Left ventricle myocardium inferior (tissue), 1 donor: ENCODE measurements at regions of chr16 and their contacts with region 1.

Region 1: GRCh38 chr16:58032710-58033293 is 7.2 kb downstream of the MMP15 start:
- DNase-seq: peak; percentile 62
- H3K4me3 ChIP-seq: peak overlapping the region; percentile 27
- H3K27ac ChIP-seq: peak overlapping the region; percentile 96
- H3K4me1 ChIP-seq: peaks cover 89% of the 10 kb centered on the region
- H3K27me3 ChIP-seq: no peaks in the 10 kb centered on the region
- CTCF ChIP-seq: no peak

Region 2: GRCh38 chr16:57846078-57846697 is 186.6 kb before region 1 on chr16:
- intact Hi-C with region 1: no loop called
- DNase-seq: no peak
- H3K4me3 ChIP-seq: no peak overlapping the region
- H3K27ac ChIP-seq: no peak overlapping the region
- H3K4me1 ChIP-seq: no peaks in the 10 kb centered on the region
- H3K27me3 ChIP-seq: no peaks in the 10 kb centered on the region
- CTCF ChIP-seq: no peak

Region 3: DNA sequence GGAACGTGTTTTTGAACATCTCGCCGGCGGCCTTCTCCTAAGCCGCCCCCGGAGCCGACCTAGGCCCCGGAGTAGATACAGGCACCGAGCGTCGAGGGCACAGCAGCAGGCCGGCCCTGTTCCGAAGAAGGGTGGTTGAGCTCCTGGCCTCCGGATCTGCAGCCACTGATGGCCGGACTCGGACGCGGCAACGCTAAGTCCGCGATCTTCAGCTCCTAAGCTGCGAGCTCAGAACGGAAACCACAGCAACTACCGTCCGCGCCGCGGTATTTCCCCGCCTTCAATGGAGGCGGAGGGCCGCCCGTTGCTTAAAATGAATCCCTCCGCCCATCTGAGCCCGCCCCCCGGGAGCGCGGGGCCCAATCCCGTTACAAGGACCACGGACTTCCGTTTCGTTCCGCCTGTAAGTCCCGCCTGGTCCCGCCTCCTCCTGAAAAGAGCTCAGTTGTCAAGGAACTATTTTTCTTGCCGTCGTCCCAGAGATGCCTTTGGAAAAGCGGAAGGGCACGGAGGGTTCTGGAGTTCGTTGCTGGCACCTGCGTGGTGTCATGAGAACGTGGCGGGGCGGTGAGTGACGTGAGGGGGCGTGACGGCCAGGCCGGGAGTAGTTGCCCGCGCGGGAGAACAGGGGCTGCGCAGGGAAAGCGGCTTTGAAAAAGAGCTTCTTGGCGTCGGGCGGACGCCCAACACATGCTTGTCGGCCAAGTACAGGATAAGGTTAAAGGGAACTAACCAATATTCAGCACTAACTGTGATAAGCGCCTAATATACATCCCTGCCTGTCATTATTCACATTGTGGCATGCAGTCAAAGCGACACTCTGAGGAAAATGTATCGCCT is 96.5 kb after region 1 on chr16 and contains the start of gene CFAP20:
- intact Hi-C with region 1: loop called (anchors 5 kb)
- DNase-seq: peak; percentile 99
- H3K4me3 ChIP-seq: peak within 1 kb of the TSS; percentile 97
- H3K27ac ChIP-seq: peak within 1 kb of the TSS; percentile 96
- H3K4me1 ChIP-seq: peaks cover 52% of the 10 kb centered on the region
- H3K27me3 ChIP-seq: no peaks in the 10 kb centered on the region
- CTCF ChIP-seq: no peak
- total RNA-seq, gene CFAP20: 34.5 TPM